Activated T-helper 1 cell treated with anti-CD3 and anti-CD28 coated beads, Interleukin-12 subunit alpha, Interleukin-12 subunit beta, Interleukin-2, Interleukin-4 antibody, amounts not matched to agents 30 ng/mL and 10 ng/mL and 1 ng/mL, durations not matched to agents 14 hours and 24 hours and 36 hours (primary cell): ENCODE measurements at regions of chr4 and their contacts with region 1.

Region 1: DNA sequence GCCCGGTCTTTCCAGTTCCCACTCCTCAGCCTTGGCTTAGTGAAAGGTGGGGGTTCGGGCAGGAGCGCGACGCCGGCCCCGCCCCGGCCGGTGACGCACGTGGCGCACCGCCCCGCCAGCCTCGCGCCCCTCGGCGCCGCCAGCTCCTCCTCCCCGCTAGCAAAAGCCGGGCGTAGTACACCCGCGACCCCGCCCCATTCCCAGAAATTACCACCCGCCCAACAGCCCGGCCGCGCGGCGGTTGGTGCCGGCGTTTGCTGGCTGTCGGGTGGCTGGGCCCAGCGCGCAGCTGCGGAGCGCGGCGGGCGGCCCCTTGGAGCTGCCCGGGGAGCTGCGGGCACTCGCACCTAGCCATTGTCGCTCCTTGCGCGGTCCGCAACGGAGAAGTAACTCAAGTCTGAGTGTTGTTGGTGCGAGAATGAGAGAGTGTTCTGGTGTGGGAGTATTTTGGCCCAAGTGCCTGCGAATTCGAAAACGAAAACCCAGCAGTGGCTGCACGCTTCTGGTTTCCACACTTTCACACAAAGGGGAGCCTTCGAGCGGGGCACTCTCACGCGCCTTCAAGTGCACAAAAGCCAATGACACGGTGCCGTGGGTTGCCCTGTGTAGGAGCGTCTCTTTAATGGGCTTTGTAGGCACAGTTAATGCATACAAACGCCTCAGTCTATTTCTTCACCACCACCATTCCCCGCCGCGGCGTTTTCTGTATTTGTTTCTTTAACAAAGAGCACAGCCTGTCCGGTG is 1.0 kb upstream of the ELF2 start:
- DNase-seq: peak; percentile 97
- H3K4me3 Mint-ChIP-seq: peak overlapping the region; percentile 86
- H3K27ac Mint-ChIP-seq: peak overlapping the region; percentile 91
- H3K4me1 Mint-ChIP-seq: peaks cover 36% of the 10 kb centered on the region
- H3K27me3 Mint-ChIP-seq: peaks cover 50% of the 10 kb centered on the region

Region 2: GRCh38 chr4:139030614-139031235 is 147.3 kb before region 1 on chr4:
- intact Hi-C with region 1: loop called (anchors 2 kb)
- DNase-seq: peak; percentile 55
- H3K4me3 Mint-ChIP-seq: no peak overlapping the region
- H3K27ac Mint-ChIP-seq: no peak overlapping the region
- H3K4me1 Mint-ChIP-seq: peaks cover 15% of the 10 kb centered on the region
- H3K27me3 Mint-ChIP-seq: no peaks in the 10 kb centered on the region

Region 3: DNA sequence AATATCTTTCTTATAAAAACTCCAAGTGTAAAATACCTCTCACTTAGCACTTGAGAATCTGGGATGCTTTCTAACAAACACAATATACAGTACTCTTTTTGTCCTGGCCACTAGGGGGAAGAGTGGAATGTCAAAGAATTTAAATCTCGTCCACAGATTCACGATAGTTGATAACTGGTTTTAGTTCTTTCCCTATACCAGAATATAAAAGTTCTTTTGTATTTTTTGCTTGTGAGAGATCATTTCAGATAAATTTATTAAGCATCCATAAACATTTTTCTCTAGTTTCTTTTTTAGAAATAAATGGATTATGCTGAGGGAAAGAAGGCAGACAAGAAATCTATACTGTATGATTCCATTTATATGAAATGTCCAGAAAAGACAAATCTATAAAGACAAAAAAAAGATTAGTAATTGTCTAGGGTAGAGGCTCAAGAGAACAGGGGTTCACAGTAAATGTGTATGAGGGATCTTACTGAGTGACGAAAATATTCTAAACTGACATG is 51.5 kb after region 1 on chr4:
- intact Hi-C with region 1: loop called (anchors 2 kb)
- DNase-seq: no peak
- H3K4me3 Mint-ChIP-seq: no peak overlapping the region
- H3K27ac Mint-ChIP-seq: no peak overlapping the region
- H3K4me1 Mint-ChIP-seq: no peaks in the 10 kb centered on the region
- H3K27me3 Mint-ChIP-seq: no peaks in the 10 kb centered on the region

Region 4: DNA sequence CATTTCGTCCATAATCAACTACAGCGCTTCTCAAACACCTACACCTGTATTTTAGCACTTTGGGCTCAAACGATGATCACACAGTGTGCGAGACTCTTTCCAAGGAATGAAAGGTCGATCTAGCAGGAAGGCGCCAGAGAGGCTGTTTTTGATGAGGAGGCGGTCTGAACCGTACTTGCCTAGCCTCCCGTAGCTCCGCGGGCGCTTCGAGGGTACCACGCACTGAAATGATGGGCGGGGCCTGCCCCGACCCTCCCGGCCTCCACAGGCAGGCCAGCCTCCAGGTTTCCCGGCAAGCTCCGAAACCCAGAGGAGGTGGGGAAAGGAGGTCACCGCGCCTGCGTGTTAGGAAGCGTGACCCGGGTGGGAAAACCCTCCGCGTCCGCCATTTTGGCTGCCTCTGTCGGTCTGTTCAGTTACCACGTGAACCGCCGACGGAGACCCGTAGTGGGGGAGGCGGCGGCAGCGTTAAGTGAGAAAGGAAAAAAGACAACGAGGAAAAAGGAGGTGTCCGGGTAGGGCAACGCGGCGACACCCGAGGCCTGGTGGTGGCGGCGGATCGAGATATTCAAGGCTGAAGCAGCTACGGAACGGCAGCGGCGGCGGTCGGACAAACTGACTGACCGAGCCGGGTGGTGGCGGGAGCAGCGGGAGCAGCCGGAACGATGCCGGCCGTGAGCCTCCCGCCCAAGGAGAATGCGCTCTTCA is 123.2 kb after region 1 on chr4 and contains the start of gene NAA15:
- intact Hi-C with region 1: loop called (anchors 1 kb)
- DNase-seq: peak; percentile 97
- H3K4me3 Mint-ChIP-seq: peak within 1 kb of the TSS; percentile 95
- H3K27ac Mint-ChIP-seq: peak within 1 kb of the TSS; percentile 97
- H3K4me1 Mint-ChIP-seq: peaks cover 69% of the 10 kb centered on the region
- H3K27me3 Mint-ChIP-seq: no peaks in the 10 kb centered on the region
- total RNA-seq, gene NAA15: 104 and 110 TPM in 2 replicates

Region 5: GRCh38 chr4:139633661-139634060 is 455.6 kb after region 1 on chr4:
- intact Hi-C with region 1: no loop called
- DNase-seq: no peak
- H3K4me3 Mint-ChIP-seq: no peak overlapping the region
- H3K27ac Mint-ChIP-seq: no peak overlapping the region
- H3K4me1 Mint-ChIP-seq: no peaks in the 10 kb centered on the region
- H3K27me3 Mint-ChIP-seq: peaks cover 25% of the 10 kb centered on the region

Region 6: GRCh38 chr4:139651282-139652194 is 473.5 kb after region 1 on chr4:
- intact Hi-C with region 1: no loop called
- DNase-seq: peak; percentile 29
- H3K4me3 Mint-ChIP-seq: no peak overlapping the region
- H3K27ac Mint-ChIP-seq: no peak overlapping the region
- H3K4me1 Mint-ChIP-seq: peaks cover 20% of the 10 kb centered on the region
- H3K27me3 Mint-ChIP-seq: no peaks in the 10 kb centered on the region

Region 7: GRCh38 chr4:139794158-139794954 is 616.3 kb after region 1 on chr4:
- intact Hi-C with region 1: no loop called
- DNase-seq: no peak
- H3K4me3 Mint-ChIP-seq: no peak overlapping the region
- H3K27ac Mint-ChIP-seq: no peak overlapping the region
- H3K4me1 Mint-ChIP-seq: no peaks in the 10 kb centered on the region
- H3K27me3 Mint-ChIP-seq: peaks cover 25% of the 10 kb centered on the region

Region 8: GRCh38 chr4:139858436-139859225 is 680.6 kb after region 1 on chr4:
- intact Hi-C with region 1: loop called (anchors 5 kb)
- DNase-seq: no peak
- H3K4me3 Mint-ChIP-seq: no peak overlapping the region
- H3K27ac Mint-ChIP-seq: no peak overlapping the region
- H3K4me1 Mint-ChIP-seq: peaks cover 33% of the 10 kb centered on the region
- H3K27me3 Mint-ChIP-seq: peaks cover 18% of the 10 kb centered on the region

Region 9: DNA sequence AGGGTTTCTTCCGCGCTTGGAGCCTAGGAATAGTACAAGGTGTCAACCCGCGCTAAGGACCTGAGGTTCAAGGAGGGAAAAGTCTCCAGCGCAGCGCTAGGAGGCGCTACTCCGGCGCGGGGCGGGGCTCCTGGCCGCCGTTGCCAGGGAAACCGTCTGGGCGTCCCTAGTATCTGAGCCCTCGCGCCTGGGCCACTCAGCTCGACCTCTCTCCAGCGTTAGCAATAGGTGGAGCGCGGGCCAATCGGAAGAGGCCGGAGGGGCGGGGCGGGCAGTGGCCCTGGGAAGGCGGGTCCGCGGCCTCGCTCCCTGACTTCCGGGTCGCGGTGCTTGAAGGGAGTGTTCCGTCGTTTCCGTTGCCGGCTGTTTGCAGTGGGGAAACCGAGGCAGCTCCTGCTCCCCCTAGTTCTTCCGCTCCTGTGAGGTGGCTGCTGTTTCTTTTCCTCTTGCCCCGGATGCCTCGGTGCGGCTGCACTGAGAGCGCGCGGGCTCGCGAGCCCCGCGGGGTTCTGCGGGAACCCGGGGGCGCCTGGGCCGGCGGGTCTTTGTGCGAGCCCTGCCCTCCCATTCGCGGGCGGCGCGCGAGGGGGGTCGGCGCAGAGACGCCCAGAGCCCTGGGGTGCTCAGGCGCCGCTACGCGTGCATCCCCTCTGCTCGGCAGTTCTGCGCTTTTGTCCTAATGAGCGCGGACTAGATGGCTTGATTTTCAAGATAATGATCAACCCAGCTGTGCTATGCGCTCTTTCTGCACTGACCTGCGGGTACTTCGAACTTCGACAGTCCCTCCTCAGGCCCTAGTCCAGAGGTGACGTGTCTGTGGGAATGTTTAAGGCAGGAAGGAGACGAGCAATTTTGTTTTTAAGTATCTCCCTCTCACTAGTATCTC is 1346.1 kb after region 1 on chr4 and contains the start of gene ELMOD2:
- intact Hi-C with region 1: loop called (anchors 1 kb)
- DNase-seq: peak; percentile 97
- H3K4me3 Mint-ChIP-seq: peak within 1 kb of the TSS; percentile 88
- H3K27ac Mint-ChIP-seq: peak within 1 kb of the TSS; percentile 55
- H3K4me1 Mint-ChIP-seq: peaks cover 19% of the 10 kb centered on the region
- H3K27me3 Mint-ChIP-seq: no peaks in the 10 kb centered on the region
- total RNA-seq, gene ELMOD2: 10.8 and 15.7 TPM in 2 replicates